ENCODE measurements at regions of chr10 and their contacts with region 1.

Region 1: DNA sequence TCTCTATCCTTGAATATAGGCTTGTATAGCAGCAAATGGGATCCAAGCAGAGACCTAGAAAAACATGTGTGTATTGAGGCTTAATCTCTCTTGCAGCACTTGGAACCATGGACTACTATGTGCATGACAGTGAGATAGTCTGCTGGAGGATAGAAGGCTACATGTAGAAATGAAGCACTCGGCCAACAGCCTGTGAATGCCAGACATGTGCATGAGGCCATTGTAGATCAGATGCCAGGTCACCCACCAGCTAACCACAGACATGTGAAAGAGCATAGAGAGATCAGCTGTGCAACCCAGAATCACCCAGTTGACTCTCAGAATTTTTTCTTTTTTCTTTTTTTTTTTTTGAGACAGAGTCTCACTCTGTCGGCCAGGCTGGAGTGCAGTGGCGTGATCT is 90.9 kb downstream of the NT5C2 start:
- DNase-seq: no peak
- ATAC-seq: no peak
- H3K4me3 ChIP-seq: no peak overlapping the region
- H3K27ac ChIP-seq: no peak overlapping the region
- H3K4me1 ChIP-seq: peaks cover 35% of the 10 kb centered on the region
- H3K27me3 ChIP-seq: no peaks in the 10 kb centered on the region
- CTCF ChIP-seq: no peak

Region 2: DNA sequence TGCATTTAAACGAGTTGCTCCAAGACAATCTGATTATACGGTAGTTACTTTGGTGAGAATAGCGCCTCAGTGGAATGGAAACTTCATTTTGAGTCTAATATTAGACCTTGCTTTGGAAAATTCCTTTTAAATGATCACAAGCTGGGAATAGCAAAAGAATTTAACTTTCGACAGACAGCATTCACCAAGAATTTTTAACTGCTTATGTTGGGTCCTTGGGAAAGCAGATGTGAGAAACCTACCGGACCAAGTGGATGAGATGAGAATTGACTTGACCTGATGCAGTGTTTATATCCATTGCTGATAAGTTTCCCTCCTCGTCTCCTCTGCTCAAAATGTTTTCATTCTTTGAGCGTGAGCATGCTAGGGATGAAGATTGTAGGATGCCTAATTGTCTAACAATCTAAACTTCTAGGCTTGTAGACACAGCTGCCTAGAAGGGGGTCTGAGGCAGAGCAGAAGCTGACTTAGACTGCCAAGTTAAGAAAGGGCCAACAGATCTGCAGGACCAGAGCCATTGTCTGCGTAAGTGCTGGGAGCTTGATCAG is 57.2 kb before region 1 on chr10:
- CTCF ChIA-PET with region 1: no interaction called
- POLR2A ChIA-PET with region 1: no interaction called
- intact Hi-C with region 1: no loop called
- DNase-seq: no peak
- ATAC-seq: no peak
- H3K4me3 ChIP-seq: no peak overlapping the region
- H3K27ac ChIP-seq: no peak overlapping the region
- H3K4me1 ChIP-seq: no peaks in the 10 kb centered on the region
- H3K27me3 ChIP-seq: no peaks in the 10 kb centered on the region
- CTCF ChIP-seq: no peak

Region 3: GRCh38 chr10:103168486-103169311 is 66.5 kb after region 1 on chr10:
- CTCF ChIA-PET with region 1: interaction called, 19 read pairs
- POLR2A ChIA-PET with region 1: no interaction called
- intact Hi-C with region 1: no loop called
- DNase-seq: peak; percentile 81
- ATAC-seq: peak; percentile 94
- H3K4me3 ChIP-seq: peak overlapping the region; percentile 32; the same call in 1 of the 2 replicates
- H3K27ac ChIP-seq: peak overlapping the region; percentile 75
- H3K4me1 ChIP-seq: peaks cover 40% of the 10 kb centered on the region
- H3K27me3 ChIP-seq: no peaks in the 10 kb centered on the region
- CTCF ChIP-seq: no peak

Region 4: GRCh38 chr10:104417637-104418296 is 1315.6 kb after region 1 on chr10:
- CTCF ChIA-PET with region 1: no interaction called
- POLR2A ChIA-PET with region 1: no interaction called
- intact Hi-C with region 1: no loop called
- DNase-seq: no peak
- ATAC-seq: no peak
- H3K4me3 ChIP-seq: no peak overlapping the region
- H3K27ac ChIP-seq: no peak overlapping the region
- H3K4me1 ChIP-seq: peaks cover 4% of the 10 kb centered on the region; the same call in 1 of the 2 replicates
- H3K27me3 ChIP-seq: peaks cover 29% of the 10 kb centered on the region
- CTCF ChIP-seq: no peak